ENCODE measurements at regions of chr9 and their contacts with region 1.

Region 1: DNA sequence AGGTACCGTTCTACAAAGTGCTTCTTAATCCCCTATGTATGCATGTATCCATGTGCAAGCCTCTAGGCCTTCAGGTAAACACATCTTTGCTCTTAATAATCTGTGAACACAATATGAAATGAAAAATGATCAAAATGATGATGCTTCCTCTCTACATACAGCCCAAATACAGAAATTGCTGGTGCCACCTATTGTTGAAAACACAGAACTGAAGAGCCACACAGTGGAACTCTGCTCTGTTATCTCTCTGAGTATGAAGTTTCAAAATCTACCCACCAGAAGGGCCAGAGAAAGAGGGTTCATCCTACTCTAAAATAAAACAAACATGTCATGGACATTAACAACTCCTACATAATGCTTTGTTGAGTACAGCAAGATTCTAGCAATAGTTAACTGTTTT is 71.3 kb downstream of the GLIS3 start:
- DNase-seq: no peak
- ATAC-seq: peak; percentile 84
- H3K4me3 ChIP-seq: no peak overlapping the region
- H3K27ac ChIP-seq: no peak overlapping the region
- H3K4me1 ChIP-seq: no peaks in the 10 kb centered on the region
- H3K27me3 ChIP-seq: peaks cover 0 to 2% of the 10 kb centered on the region in 2 experiments; a peak in 1 of 4 replicates
- CTCF ChIP-seq: peak; percentile 38 to 48 (median 43); a peak in 5 of 6 replicates
- EP300 ChIP-seq: no peak
- POLR2A ChIP-seq: no peak
- RAD21 ChIP-seq: peak; percentile 46; the same call in 1 of the 2 replicates

Region 2: GRCh38 chr9:3732077-3733038 is 496.2 kb before region 1 on chr9:
- CTCF ChIA-PET with region 1: interaction called, 28 read pairs
- POLR2A ChIA-PET with region 1: no interaction called
- RAD21 ChIA-PET with region 1: no interaction called
- SMC1A ChIA-PET with region 1: interaction called, 4 read pairs
- in situ Hi-C with region 1: no loop called
- intact Hi-C with region 1: loop called (anchors 2 kb)
- DNase-seq: peak; percentile 64
- ATAC-seq: peak; percentile 88
- H3K4me3 ChIP-seq: no peak overlapping the region
- H3K27ac ChIP-seq: no peak overlapping the region
- H3K4me1 ChIP-seq: peaks cover 22% of the 10 kb centered on the region
- H3K27me3 ChIP-seq: no peaks in the 10 kb centered on the region
- CTCF ChIP-seq: peak; percentile 60 to 83 (median 65)
- EP300 ChIP-seq: no peak
- POLR2A ChIP-seq: no peak
- RAD21 ChIP-seq: peak; percentile 83

Region 3: DNA sequence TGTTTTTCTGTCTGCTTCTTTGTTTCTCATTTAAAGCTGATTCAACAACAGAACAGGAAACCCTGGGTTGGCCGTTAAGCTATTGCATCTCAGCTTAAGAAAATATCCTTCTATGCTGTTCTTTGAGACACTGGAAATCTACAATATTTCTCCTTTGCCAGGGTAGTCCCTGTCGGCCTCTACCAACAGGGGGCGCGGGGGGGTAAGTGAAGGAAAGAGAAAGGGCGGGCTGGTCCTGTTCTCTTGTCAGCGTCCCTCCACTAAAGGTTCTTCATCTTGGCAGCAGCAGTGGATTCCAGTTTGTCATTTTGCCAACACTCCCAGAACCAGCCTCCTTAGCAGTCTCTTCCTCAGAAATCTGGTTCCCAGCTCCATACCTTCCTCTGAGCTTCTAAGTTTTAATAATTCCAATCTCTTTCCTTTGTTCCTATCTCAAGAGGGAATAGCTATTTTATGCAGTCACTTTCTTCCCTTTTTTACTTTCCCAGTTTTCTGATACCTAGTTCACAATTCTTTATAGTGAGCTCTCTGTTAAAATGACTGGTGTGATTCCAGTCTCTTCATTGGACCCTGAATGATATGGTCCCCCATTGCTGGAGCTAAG is 151.0 kb before region 1 on chr9:
- CTCF ChIA-PET with region 1: interaction called, 3 read pairs
- POLR2A ChIA-PET with region 1: no interaction called
- RAD21 ChIA-PET with region 1: no interaction called
- SMC1A ChIA-PET with region 1: no interaction called
- in situ Hi-C with region 1: no loop called
- intact Hi-C with region 1: loop called (anchors 5 kb)
- DNase-seq: no peak
- ATAC-seq: peak; percentile 88
- H3K4me3 ChIP-seq: no peak overlapping the region
- H3K27ac ChIP-seq: no peak overlapping the region
- H3K4me1 ChIP-seq: no peaks in the 10 kb centered on the region
- H3K27me3 ChIP-seq: no peaks in the 10 kb centered on the region
- CTCF ChIP-seq: peak; percentile 54 to 78 (median 72)
- EP300 ChIP-seq: no peak
- POLR2A ChIP-seq: no peak
- RAD21 ChIP-seq: peak; percentile 63

Region 4: DNA sequence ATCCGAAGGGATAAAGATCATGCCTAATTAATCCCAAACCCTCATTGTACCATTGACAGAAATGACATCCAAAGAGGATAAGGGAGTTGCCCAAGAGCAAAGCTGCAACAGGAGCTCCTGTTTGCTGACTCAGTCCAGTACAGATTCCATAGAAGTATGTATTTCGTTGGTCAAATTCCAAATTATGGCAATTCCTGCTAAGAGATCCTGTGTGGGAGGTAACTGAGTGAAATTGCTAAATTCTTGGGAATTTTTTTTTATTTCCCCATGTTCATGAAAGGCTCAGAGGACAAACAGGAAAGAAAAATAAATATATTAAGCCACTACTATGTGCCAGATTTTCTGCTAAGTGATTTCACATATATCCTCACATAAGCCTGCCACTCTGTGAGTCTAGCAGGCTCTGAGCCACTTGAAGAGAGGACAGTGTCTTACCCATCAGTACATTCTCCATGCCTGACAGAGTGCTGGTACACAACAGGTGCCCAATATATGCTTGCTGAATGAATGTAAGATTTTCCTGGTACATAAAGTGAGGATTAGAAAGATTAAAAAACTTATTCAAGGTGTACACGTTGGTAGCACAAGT is 61.4 kb before region 1 on chr9:
- CTCF ChIA-PET with region 1: no interaction called
- POLR2A ChIA-PET with region 1: interaction called, 15 read pairs
- RAD21 ChIA-PET with region 1: no interaction called
- SMC1A ChIA-PET with region 1: no interaction called
- in situ Hi-C with region 1: no loop called
- intact Hi-C with region 1: no loop called
- DNase-seq: no peak
- ATAC-seq: no peak
- H3K4me3 ChIP-seq: no peak overlapping the region
- H3K27ac ChIP-seq: no peak overlapping the region
- H3K4me1 ChIP-seq: no peaks in the 10 kb centered on the region
- H3K27me3 ChIP-seq: peaks cover 0 to 3% of the 10 kb centered on the region in 2 experiments; a peak in 1 of 4 replicates
- CTCF ChIP-seq: no peak
- EP300 ChIP-seq: no peak
- POLR2A ChIP-seq: no peak
- RAD21 ChIP-seq: no peak

Measured in GM12878 (cell line).